ENCODE measurements at regions of chr19 and their contacts with region 1.

Region 1: GRCh38 chr19:1087813-1088415 is 7.3 kb downstream of the POLR2E start:
- DNase-seq: peak; percentile 71
- ATAC-seq: peak; percentile 32
- H3K4me3 Mint-ChIP-seq: peak overlapping the region; percentile 76
- H3K27ac Mint-ChIP-seq: peak overlapping the region; percentile 95
- H3K4me1 Mint-ChIP-seq: peaks cover 34% of the 10 kb centered on the region
- H3K27me3 Mint-ChIP-seq: no peaks in the 10 kb centered on the region

Region 2: DNA sequence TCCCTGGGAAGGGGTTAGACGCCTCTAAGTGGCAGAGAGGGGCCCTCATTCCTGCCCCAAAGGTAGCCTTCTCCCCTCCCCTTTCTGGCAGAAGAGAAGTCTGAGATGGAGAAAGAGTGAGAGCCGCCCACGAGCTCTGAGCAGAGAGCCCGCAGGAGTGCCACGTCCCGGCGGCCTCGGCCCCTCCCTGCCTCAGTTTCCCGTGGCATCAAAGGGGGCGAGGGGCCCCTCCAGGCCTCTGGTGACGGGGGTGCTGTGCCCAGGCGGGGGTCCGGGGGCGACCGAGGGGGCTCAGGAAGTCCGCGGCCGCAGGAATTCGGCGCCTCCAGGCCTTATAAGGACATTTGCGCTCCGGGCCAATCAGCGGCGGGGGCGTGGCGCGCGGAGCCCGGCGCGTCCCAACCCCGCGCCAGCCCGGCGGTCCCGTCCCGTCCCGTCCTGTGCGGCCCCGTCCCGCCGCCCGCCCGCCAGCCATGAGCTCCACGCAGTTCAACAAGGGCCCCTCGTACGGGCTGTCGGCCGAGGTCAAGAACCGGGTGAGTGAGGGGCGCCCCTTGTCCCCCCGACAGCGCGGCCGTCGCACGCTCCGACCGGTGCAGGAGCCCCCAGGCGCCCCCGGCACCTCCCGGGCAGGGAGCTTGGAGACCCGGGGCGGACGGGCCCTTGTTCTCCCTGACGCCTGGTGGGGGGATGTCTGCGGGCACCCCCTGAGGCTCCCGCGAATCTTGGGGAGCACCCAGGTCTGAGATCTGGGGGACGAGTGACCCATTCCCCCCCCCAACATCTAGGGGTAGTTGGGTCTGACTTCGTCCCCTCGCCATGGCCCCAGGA is 61.5 kb before region 1 on chr19 and contains the start of gene CNN2:
- POLR2A ChIA-PET with region 1: interaction called, 130 read pairs
- DNase-seq: peak; percentile 84
- ATAC-seq: peak; percentile 59
- H3K4me3 Mint-ChIP-seq: peak within 1 kb of the TSS; percentile 96
- H3K27ac Mint-ChIP-seq: peak within 1 kb of the TSS; percentile 92
- H3K4me1 Mint-ChIP-seq: peaks cover 18% of the 10 kb centered on the region
- H3K27me3 Mint-ChIP-seq: no peaks in the 10 kb centered on the region
- total RNA-seq, gene CNN2: 340 to 353 TPM

Region 3: GRCh38 chr19:1103708-1104310 is 15.9 kb after region 1 on chr19 and contains the start of gene GPX4:
- POLR2A ChIA-PET with region 1: interaction called, 13 read pairs
- DNase-seq: peak; percentile 96
- ATAC-seq: peak; percentile 86
- H3K4me3 Mint-ChIP-seq: peak within 1 kb of the TSS; percentile 79
- H3K27ac Mint-ChIP-seq: peak within 1 kb of the TSS; percentile 80
- H3K4me1 Mint-ChIP-seq: peaks cover 27% of the 10 kb centered on the region
- H3K27me3 Mint-ChIP-seq: no peaks in the 10 kb centered on the region
- total RNA-seq, gene GPX4: 194 to 206 TPM